ENCODE measurements at regions of chr18 and their contacts with region 1.

Region 1: DNA sequence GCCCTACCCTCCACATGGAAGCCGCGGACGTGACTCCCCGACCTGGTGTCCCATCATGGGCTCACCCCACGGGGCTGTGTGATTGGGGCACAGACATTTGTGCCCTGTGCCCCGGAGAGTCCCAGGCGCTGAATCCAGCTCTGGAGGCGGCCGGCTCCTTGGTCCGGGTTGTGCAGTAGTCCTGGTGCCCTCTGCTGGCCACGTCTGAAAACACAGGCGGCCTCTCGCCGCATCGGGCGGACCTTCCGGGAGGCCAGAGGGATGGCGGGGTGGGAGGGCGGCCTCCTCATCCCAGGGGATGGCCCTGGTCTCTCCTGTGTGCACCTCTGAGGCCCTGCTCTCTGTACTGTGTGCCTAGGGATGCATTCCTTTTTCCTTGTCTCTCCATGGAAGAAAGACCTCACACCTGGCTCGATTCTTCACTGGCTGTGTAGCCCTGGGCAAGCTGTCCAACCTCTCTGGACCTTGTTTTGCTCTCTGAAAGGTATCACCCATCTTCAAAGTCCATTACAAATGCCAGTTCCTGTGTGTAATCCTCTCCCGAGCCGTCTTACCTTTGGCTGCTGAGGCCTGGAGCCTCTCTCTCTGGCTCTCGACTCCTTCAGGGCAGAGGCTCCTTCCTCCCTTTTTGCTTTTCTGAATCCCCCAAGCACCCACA is 27.6 kb downstream of the CELF4 start:
- DNase-seq: peak; percentile 37
- ATAC-seq: peak; percentile 95
- H3K4me3 ChIP-seq: no peak overlapping the region
- H3K27ac ChIP-seq: no peak overlapping the region
- H3K4me1 ChIP-seq: no peaks in the 10 kb centered on the region
- H3K27me3 ChIP-seq: peaks cover 41% of the 10 kb centered on the region
- CTCF ChIP-seq: peak; percentile 71 to 84 (median 82)
- POLR2A ChIP-seq: no peak
- RAD21 ChIP-seq: peak; percentile 77

Region 2: DNA sequence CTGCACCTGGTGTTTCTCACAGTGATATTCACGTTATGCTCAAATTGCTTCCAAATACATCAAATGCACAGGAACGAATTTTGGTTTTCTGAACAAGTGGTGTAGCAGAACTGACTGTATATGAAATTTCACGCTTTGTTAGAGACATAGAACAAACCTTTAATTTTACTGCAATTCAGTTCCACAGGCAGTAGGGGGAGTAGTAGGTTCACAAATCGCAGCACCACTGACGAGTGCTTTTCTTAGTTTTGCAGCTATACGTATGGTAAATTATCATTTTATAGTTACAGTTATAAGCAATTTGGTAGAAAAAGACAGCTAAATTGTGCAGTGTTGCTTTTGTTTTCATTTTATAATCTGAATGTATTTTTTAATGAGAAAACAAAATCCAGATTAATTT is 595.7 kb before region 1 on chr18:
- CTCF ChIA-PET with region 1: interaction called, 4 read pairs
- POLR2A ChIA-PET with region 1: no interaction called
- RAD21 ChIA-PET with region 1: no interaction called
- intact Hi-C with region 1: loop called (anchors 1 kb)
- DNase-seq: peak; percentile 18
- ATAC-seq: peak; percentile 76
- H3K4me3 ChIP-seq: no peak overlapping the region
- H3K27ac ChIP-seq: no peak overlapping the region
- H3K4me1 ChIP-seq: peaks cover 0 to 4% of the 10 kb centered on the region in 2 experiments; a peak in 1 of 4 replicates
- H3K27me3 ChIP-seq: no peaks in the 10 kb centered on the region
- CTCF ChIP-seq: peak; percentile 45 to 90 (median 74); a peak in 5 of 6 replicates
- POLR2A ChIP-seq: no peak
- RAD21 ChIP-seq: peak; percentile 73

Region 3: DNA sequence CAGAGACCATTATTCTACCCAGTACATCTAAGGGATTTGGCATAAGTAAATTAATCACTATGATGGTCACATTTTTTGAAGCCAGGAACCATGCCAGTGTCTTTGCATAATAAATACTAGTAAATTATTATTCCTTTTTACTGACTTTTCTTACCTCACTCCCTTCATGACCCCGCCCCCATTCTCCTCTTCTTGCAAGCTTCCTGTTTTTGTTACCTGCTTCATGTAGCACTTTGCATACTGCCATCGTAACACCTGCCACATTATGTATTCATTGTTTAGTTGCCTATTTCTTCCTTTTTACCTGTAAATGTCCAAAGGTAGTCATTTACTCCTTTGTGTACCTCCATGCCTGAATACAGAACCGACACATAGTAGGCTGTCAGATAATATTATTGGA is 399.5 kb before region 1 on chr18:
- CTCF ChIA-PET with region 1: no interaction called
- POLR2A ChIA-PET with region 1: no interaction called
- RAD21 ChIA-PET with region 1: no interaction called
- intact Hi-C with region 1: no loop called
- DNase-seq: no peak
- ATAC-seq: no peak
- H3K4me3 ChIP-seq: no peak overlapping the region
- H3K27ac ChIP-seq: no peak overlapping the region
- H3K4me1 ChIP-seq: no peaks in the 10 kb centered on the region
- H3K27me3 ChIP-seq: no peaks in the 10 kb centered on the region
- CTCF ChIP-seq: no peak
- POLR2A ChIP-seq: no peak
- RAD21 ChIP-seq: no peak

Region 4: DNA sequence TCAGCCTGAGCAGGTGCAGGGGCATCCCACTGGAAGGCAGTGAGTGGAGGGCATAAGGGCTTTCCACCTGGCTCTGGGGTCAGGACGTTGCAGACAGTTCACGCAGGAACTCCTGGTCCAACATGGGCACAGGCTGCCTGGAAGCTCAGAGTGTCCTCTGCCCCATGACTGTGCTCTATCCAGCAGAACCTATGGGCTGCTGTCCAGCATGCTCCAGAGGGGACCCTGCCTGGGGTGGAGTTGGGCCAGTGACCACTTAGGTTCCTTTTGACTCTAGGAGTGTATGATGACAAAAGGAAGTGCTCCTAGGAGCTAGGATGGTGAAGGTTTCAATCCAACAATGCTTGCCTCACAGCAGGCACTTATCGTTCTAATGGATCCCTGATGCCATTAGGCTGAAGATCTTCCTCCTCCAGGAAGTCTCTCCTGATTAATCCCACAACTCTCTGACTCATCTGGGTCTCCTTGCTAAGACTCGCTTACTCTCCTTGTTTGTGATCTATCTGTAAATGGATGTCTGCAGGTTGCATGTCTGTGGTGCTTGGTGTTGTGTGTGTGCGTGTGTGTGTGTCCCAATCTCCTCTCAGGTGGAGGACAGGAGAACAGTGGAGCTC is 196.4 kb before region 1 on chr18:
- CTCF ChIA-PET with region 1: interaction called, 3 read pairs
- POLR2A ChIA-PET with region 1: no interaction called
- RAD21 ChIA-PET with region 1: interaction called in 1 of 2 experiments, 3 read pairs
- intact Hi-C with region 1: loop called (anchors 1 kb)
- DNase-seq: no peak
- ATAC-seq: no peak
- H3K4me3 ChIP-seq: no peak overlapping the region
- H3K27ac ChIP-seq: no peak overlapping the region
- H3K4me1 ChIP-seq: no peaks in the 10 kb centered on the region
- H3K27me3 ChIP-seq: peaks cover 21% of the 10 kb centered on the region; the same call in 1 of the 2 replicates
- CTCF ChIP-seq: no peak
- POLR2A ChIP-seq: no peak
- RAD21 ChIP-seq: no peak

Region 5: DNA sequence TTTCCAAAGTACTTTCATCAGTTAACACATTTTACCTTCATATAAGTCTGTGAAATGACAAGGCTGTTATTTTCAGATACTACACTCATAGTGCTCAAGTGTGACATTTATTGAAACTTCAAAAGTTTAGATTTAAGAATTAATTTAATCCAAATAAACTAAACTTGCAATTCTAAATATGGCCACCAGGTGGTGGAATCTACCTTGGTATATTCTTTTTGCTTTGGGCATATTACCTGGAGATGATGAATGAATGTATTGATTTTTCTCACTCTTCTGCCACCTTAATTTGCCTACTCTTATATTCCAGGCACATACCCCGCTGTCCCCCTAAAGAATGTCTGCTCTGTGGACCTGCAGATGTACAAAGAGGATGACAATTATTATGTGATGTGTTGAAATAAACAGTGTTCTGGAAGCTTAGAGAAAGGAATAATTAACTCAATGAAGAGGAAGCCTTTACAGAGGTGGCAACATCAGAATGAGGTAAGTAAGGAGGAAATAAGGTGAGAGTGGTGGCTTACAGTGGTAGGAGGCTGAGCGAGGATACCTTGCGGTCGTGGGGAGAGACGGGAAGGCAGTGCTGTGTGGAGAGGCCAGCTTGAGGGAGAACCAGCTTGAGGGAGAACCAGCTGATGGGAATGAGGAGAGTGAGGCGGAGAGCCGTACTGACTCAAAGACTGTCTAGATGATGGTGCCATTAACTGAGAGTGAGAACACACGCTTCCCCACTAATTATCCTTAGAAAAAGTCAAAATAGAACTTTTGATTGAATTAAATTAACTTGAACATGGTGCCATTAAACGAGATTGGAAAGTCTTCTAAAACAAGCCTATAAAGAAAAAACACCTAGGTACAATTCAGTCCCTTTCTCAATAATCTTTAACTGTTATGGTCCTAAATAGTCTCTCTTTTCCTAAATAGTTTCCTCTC is 151.9 kb before region 1 on chr18:
- CTCF ChIA-PET with region 1: interaction called, 10 read pairs
- POLR2A ChIA-PET with region 1: no interaction called
- RAD21 ChIA-PET with region 1: no interaction called
- intact Hi-C with region 1: loop called (anchors 1 kb)
- DNase-seq: peak; percentile 24
- ATAC-seq: no peak
- H3K4me3 ChIP-seq: no peak overlapping the region
- H3K27ac ChIP-seq: no peak overlapping the region
- H3K4me1 ChIP-seq: no peaks in the 10 kb centered on the region
- H3K27me3 ChIP-seq: peaks cover 6% of the 10 kb centered on the region; the same call in 1 of the 2 replicates
- CTCF ChIP-seq: peak; percentile 48 to 80 (median 77); a peak in 5 of 6 replicates
- POLR2A ChIP-seq: no peak
- RAD21 ChIP-seq: peak; percentile 81

Region 6: DNA sequence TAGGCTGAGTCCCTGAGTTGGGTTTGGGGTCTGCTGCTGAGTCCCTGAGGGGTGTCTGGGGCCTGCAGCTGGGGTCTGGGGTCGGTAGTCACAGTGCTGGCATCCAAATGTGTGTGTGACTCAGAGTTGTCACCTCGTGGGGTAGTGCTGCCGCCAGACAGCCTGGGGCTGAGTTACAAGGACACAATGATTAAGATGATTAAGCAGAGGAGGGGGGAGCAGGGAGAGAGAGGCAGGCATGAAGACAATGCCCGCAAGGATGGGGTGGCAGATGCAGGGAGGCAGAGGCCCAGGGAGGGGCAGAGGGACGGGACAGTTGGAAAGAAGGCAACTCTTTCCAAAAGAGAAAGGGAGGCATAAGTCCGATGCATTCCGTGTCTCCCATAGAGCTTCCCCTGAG is 92.6 kb before region 1 on chr18:
- CTCF ChIA-PET with region 1: interaction called, 3 read pairs
- POLR2A ChIA-PET with region 1: no interaction called
- RAD21 ChIA-PET with region 1: no interaction called
- intact Hi-C with region 1: loop called (anchors 2 kb)
- DNase-seq: no peak
- ATAC-seq: no peak
- H3K4me3 ChIP-seq: no peak overlapping the region
- H3K27ac ChIP-seq: no peak overlapping the region
- H3K4me1 ChIP-seq: peaks cover 9 to 13% of the 10 kb centered on the region in 2 experiments; a peak in 3 of 4 replicates
- H3K27me3 ChIP-seq: peaks cover 30% of the 10 kb centered on the region; the same call in 1 of the 2 replicates
- CTCF ChIP-seq: no peak
- POLR2A ChIP-seq: no peak
- RAD21 ChIP-seq: no peak

Region 7: GRCh38 chr18:37721544-37722522 is 183.8 kb after region 1 on chr18:
- CTCF ChIA-PET with region 1: no interaction called
- POLR2A ChIA-PET with region 1: no interaction called
- RAD21 ChIA-PET with region 1: no interaction called
- intact Hi-C with region 1: no loop called
- DNase-seq: no peak
- ATAC-seq: no peak
- H3K4me3 ChIP-seq: no peak overlapping the region
- H3K27ac ChIP-seq: no peak overlapping the region
- H3K4me1 ChIP-seq: no peaks in the 10 kb centered on the region
- H3K27me3 ChIP-seq: 0 out of 2 replicates have a peak, but pooled peaks cover 3% of the 10 kb centered on the region
- CTCF ChIP-seq: no peak
- POLR2A ChIP-seq: no peak
- RAD21 ChIP-seq: no peak